ENCODE measurements at regions of chr6 and their contacts with region 1.

Region 1: GRCh38 chr6:33579828-33580714 is at the start of gene BAK1:
- DNase-seq: peak; percentile 95
- ATAC-seq: peak; percentile 95
- H3K4me3 ChIP-seq: peak within 1 kb of the TSS; percentile 94
- H3K27ac ChIP-seq: peak within 1 kb of the TSS; percentile 91
- H3K4me1 ChIP-seq: peaks cover 14% of the 10 kb centered on the region
- H3K27me3 ChIP-seq: no peaks in the 10 kb centered on the region
- CTCF ChIP-seq: peak; percentile 63
- total RNA-seq, gene BAK1: 19.1 TPM

Region 2: GRCh38 chr6:33696548-33697518 is 116.8 kb after region 1 on chr6:
- intact Hi-C with region 1: loop called (anchors 10 kb)
- DNase-seq: no peak
- ATAC-seq: peak; percentile 3
- H3K4me3 ChIP-seq: no peak overlapping the region
- H3K27ac ChIP-seq: peak overlapping the region; percentile 60
- H3K4me1 ChIP-seq: peaks cover 61% of the 10 kb centered on the region
- H3K27me3 ChIP-seq: no peaks in the 10 kb centered on the region
- CTCF ChIP-seq: no peak